ENCODE measurements at regions of chr2 and their contacts with region 1.

Region 1: GRCh38 chr2:241877989-241878970 is 8.8 kb downstream of the RTP5 start:
- DNase-seq: peak; percentile 76
- H3K4me3 Mint-ChIP-seq: no peak overlapping the region
- H3K27ac Mint-ChIP-seq: no peak overlapping the region
- H3K4me1 Mint-ChIP-seq: no peaks in the 10 kb centered on the region
- H3K27me3 Mint-ChIP-seq: no peaks in the 10 kb centered on the region
- CTCF ChIP-seq: peak; percentile 72

Region 2: DNA sequence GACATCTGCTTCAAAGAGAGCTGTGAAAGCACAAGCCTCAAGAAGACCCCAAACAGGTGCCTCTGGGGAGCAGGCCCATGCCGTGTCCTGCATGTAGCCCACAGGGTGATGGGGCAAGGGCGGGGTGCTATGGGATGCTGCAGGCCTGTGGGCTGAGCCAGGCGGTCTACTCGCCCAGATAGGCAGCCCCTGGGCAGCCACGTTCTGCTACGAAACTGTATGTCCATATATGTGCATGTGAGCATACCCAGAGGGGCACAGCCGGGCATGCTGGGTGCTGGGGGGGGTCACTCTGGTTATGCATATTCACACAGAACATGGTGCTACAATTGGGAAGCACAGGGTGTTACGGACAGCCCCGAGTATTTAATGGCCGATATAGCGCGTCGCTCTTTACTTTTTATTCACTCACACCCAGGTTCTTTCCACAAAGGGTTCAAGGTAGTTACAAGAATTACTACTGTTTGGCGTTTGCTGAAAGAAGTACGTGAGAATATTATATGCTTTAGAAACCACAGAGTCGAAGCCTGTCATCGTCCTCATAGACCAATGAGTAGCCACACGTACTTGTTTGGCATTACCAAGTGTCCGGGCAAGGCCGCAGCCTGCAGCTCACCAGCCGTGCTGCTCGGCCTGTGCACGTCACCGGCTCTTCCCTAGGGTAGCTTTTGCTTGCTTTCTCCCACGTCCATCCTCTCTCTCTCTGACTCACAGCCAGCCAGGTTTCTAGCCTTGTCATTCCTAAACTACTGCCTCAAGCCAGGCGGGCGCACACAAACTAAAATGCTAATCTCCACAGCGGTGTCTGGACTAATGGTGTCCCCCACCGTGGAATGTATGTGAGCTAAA is 790.6 kb before region 1 on chr2:
- CTCF ChIA-PET with region 1: no interaction called
- POLR2A ChIA-PET with region 1: no interaction called
- intact Hi-C with region 1: no loop called
- DNase-seq: no peak
- H3K4me3 Mint-ChIP-seq: no peak overlapping the region
- H3K27ac Mint-ChIP-seq: no peak overlapping the region
- H3K4me1 Mint-ChIP-seq: no peaks in the 10 kb centered on the region
- H3K27me3 Mint-ChIP-seq: no peaks in the 10 kb centered on the region
- CTCF ChIP-seq: no peak

Region 3: GRCh38 chr2:241734467-241735208 is 143.6 kb before region 1 on chr2 and contains the start of gene D2HGDH:
- CTCF ChIA-PET with region 1: interaction called, 6 read pairs
- POLR2A ChIA-PET with region 1: no interaction called
- intact Hi-C with region 1: loop called (anchors 2 kb)
- DNase-seq: peak; percentile 85
- H3K4me3 Mint-ChIP-seq: peak within 1 kb of the TSS; percentile 71
- H3K27ac Mint-ChIP-seq: no peak within 1 kb of the TSS
- H3K4me1 Mint-ChIP-seq: peaks cover 10% of the 10 kb centered on the region
- H3K27me3 Mint-ChIP-seq: no peaks in the 10 kb centered on the region
- CTCF ChIP-seq: no peak
- total RNA-seq, gene D2HGDH: 37.5 and 41.5 TPM in 2 replicates

Region 4: GRCh38 chr2:241867776-241868420 is 10.4 kb before region 1 on chr2:
- CTCF ChIA-PET with region 1: interaction called, 10 read pairs
- POLR2A ChIA-PET with region 1: no interaction called
- intact Hi-C with region 1: no loop called
- DNase-seq: no peak
- H3K4me3 Mint-ChIP-seq: no peak overlapping the region
- H3K27ac Mint-ChIP-seq: no peak overlapping the region
- H3K4me1 Mint-ChIP-seq: peaks cover 18% of the 10 kb centered on the region
- H3K27me3 Mint-ChIP-seq: peaks cover 43% of the 10 kb centered on the region
- CTCF ChIP-seq: no peak

Region 5: GRCh38 chr2:241896746-241897201 is 18.5 kb after region 1 on chr2:
- CTCF ChIA-PET with region 1: no interaction called
- POLR2A ChIA-PET with region 1: no interaction called
- intact Hi-C with region 1: no loop called
- DNase-seq: no peak
- H3K4me3 Mint-ChIP-seq: no peak overlapping the region
- H3K27ac Mint-ChIP-seq: no peak overlapping the region
- H3K4me1 Mint-ChIP-seq: no peaks in the 10 kb centered on the region
- H3K27me3 Mint-ChIP-seq: no peaks in the 10 kb centered on the region
- CTCF ChIP-seq: no peak